ENCODE measurements at regions of chr6 and their contacts with region 1.

Region 1: DNA sequence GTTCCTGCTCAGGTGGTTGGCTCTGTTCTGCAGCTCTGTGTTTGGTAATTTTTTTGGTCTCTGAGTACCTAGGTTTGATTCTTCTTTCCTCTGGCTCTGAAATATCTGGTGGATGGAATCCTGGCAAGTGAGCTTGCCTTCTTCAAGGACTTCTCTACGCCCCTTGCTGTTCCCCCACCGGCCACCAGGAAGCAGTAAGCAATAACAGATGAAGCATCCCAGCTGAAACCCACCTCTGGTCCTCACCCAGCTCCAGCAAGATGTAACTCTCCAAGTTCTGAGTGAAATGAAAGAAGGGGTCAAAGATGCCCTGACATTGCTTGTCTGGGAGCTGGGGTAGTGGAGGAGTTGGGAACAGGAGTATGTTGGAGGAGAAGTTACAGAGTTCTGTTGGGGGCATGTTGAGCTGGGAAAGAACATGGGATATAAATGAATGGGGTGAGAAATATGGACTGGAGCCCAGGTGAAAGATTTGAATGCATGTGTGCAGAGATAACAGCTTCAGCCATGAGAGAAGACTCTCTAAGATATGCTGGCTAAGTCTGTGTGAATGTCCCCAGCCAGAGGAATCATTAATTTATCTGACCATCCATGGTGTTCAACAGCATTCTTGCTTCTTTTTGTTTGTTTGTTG is 51.3 kb upstream of the GLP1R start:
- DNase-seq: peak; percentile 74
- ATAC-seq: peak; percentile 66
- H3K4me3 Mint-ChIP-seq: no peak overlapping the region
- H3K27ac Mint-ChIP-seq: no peak overlapping the region
- H3K4me1 Mint-ChIP-seq: no peaks in the 10 kb centered on the region
- H3K27me3 Mint-ChIP-seq: peaks cover 32% of the 10 kb centered on the region
- CTCF ChIP-seq: peak; percentile 72

Region 2: GRCh38 chr6:38915205-38915925 is 81.9 kb before region 1 on chr6:
- CTCF ChIA-PET with region 1: no interaction called
- POLR2A ChIA-PET with region 1: no interaction called
- intact Hi-C with region 1: no loop called
- DNase-seq: no peak
- ATAC-seq: no peak
- H3K4me3 Mint-ChIP-seq: no peak overlapping the region
- H3K27ac Mint-ChIP-seq: no peak overlapping the region
- H3K4me1 Mint-ChIP-seq: no peaks in the 10 kb centered on the region
- H3K27me3 Mint-ChIP-seq: peaks cover 4% of the 10 kb centered on the region
- CTCF ChIP-seq: no peak

Region 3: DNA sequence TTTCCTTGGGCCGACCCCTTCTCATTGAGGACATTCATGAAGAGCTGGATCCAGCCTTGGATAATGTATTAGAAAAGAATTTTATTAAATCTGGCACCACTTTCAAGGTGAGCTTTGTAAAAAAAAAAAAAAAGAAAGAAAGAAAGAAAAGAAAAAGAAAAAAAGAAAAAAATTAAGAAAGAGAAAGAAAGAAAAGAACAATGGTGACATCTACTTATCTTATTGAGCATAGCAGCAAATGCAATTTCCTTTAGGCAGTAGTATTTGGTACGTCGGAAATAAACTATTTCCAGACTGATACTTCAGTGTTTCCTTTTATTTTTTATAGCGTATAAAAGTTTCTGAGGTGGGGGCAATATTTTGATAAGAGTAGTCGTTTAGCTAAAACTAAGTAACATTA is 67.7 kb before region 1 on chr6:
- CTCF ChIA-PET with region 1: no interaction called
- POLR2A ChIA-PET with region 1: no interaction called
- intact Hi-C with region 1: no loop called
- DNase-seq: no peak
- ATAC-seq: no peak
- H3K4me3 Mint-ChIP-seq: no peak overlapping the region
- H3K27ac Mint-ChIP-seq: no peak overlapping the region
- H3K4me1 Mint-ChIP-seq: no peaks in the 10 kb centered on the region
- H3K27me3 Mint-ChIP-seq: peaks cover 7% of the 10 kb centered on the region
- CTCF ChIP-seq: no peak

Region 4: DNA sequence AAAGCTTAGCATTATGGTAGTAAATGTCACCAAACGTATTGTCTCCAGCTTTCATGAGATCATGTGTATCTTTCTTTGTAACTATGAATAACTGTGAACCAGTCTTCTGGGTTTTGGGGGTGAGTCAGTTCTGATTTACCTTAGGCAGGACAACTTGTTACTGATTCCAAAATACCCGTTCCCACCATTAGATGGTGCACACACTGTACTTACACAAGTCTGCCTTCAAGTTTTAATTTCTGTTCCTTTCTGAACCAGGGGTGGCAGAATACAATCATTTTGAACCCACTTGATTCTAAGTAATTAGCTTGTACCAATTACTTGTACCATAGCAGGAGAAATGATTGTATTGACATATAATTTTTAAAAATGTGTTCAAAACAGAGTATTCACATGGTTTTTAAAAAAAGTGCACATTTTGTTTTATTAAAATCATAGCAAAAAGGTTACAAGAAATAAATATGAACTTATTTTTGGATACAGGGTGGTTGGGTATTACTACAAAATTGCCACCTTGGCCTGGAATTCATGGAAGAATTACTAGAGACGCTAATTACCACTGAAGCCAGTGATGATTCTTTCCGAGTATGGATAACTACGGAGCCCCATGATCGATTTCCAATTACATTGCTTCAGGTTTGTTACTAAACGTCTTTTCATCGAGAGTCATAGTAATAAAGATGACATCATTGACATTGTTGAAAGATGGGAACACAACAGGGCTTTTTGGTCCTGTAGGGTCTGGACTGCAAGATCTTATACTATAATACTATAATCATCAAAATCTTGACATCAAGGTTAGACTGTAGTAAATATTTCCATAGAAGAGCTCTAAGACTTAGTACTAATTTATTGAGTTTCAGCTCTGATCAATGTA is 23.8 kb before region 1 on chr6:
- CTCF ChIA-PET with region 1: interaction called, 22 read pairs
- POLR2A ChIA-PET with region 1: no interaction called
- intact Hi-C with region 1: no loop called
- DNase-seq: peak; percentile 51
- ATAC-seq: peak; percentile 97
- H3K4me3 Mint-ChIP-seq: no peak overlapping the region
- H3K27ac Mint-ChIP-seq: no peak overlapping the region
- H3K4me1 Mint-ChIP-seq: peaks cover 2% of the 10 kb centered on the region
- H3K27me3 Mint-ChIP-seq: peaks cover 13% of the 10 kb centered on the region
- CTCF ChIP-seq: peak; percentile 68

Region 5: DNA sequence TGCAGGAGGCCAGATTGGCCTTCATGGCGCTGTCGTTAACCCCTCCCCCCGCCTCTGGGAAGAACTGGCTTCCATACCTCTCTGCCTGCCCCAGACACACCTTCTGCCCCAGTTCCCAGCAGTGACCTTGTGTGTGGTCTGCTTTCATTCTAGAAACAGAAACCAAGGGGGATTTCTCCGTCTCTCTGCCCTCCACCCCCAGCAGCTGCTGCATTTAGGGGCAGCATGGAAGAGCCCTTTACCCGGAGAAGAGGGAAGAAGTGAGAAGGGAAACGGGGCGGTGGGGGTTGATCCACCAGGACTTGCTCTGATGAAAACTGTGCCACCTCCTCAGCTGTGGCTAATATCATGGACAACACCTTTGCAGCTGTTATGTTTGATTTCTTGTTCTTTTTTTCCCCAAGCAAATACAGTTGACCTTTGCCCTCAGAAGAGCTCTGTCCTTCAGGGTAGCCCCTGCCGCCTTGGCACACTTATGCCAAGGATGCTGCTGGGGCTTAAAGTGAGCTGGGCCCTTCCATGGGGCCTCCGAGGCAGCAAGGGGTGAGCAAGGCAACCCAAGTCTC is 57.4 kb after region 1 on chr6:
- CTCF ChIA-PET with region 1: no interaction called
- POLR2A ChIA-PET with region 1: no interaction called
- intact Hi-C with region 1: no loop called
- DNase-seq: no peak
- ATAC-seq: no peak
- H3K4me3 Mint-ChIP-seq: no peak overlapping the region
- H3K27ac Mint-ChIP-seq: no peak overlapping the region
- H3K4me1 Mint-ChIP-seq: peaks cover 24% of the 10 kb centered on the region
- H3K27me3 Mint-ChIP-seq: peaks cover 16% of the 10 kb centered on the region
- CTCF ChIP-seq: no peak

Region 6: GRCh38 chr6:39077882-39078594 is 80.8 kb after region 1 on chr6:
- CTCF ChIA-PET with region 1: no interaction called
- POLR2A ChIA-PET with region 1: no interaction called
- intact Hi-C with region 1: no loop called
- DNase-seq: no peak
- ATAC-seq: no peak
- H3K4me3 Mint-ChIP-seq: no peak overlapping the region
- H3K27ac Mint-ChIP-seq: no peak overlapping the region
- H3K4me1 Mint-ChIP-seq: peaks cover 9% of the 10 kb centered on the region
- H3K27me3 Mint-ChIP-seq: no peaks in the 10 kb centered on the region
- CTCF ChIP-seq: no peak

Region 7: DNA sequence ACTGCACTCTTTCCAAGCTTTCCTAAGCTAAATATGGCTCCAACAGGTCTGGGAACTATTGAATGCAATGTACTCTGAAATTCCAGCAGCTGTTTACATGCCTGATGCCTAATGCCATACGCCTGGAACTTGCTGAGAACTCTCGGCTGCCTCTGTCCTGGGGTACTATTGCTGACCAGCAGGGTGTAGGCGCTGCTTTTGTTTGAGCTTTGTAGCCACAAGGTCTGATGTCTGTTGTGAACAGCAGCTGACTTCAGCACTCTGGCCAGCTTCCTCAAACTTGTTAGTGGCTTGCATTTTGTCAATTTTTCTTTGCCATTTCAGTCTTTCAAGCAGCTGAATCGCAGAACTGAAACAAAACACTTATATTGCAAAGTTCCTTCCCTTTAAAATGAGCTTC is 91.1 kb after region 1 on chr6:
- CTCF ChIA-PET with region 1: interaction called, 11 read pairs
- POLR2A ChIA-PET with region 1: no interaction called
- intact Hi-C with region 1: no loop called
- DNase-seq: peak; percentile 61
- ATAC-seq: peak; percentile 38
- H3K4me3 Mint-ChIP-seq: no peak overlapping the region
- H3K27ac Mint-ChIP-seq: no peak overlapping the region
- H3K4me1 Mint-ChIP-seq: peaks cover 21% of the 10 kb centered on the region
- H3K27me3 Mint-ChIP-seq: peaks cover 49% of the 10 kb centered on the region
- CTCF ChIP-seq: no peak

Region 8: DNA sequence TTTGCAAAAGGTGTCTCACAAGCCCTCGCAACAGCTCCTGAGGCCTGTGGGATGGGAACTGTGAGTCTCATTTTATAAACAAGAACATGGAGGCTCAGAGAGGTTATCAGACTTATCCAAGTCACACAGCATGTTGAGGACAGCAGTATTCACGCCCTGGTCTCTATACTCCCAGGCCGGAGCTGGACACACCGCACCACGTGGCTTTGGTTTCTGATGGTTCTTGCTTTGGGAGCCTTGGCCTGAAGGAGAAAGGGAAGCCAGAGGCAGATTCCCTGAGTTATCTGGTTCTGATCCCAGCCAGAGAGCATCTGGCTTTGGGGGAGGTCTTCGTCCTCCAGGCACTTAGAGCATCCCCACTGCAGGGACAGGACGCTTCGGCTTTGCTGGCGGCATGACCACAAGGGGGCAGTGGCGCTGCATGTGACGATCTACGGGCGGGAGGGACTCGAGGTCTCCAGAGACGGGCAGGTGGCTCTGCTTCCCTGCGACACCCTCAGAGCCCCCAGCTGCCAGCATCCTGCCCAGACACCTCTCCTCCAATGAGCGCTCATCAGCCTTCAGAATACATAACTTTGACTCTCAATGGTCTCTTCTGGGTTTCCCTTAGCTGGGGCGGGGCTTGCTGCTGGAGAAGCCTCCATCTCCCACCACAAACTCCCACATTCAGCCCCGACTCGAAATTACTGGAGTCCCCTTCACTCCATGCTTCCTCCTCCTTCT is 169.1 kb after region 1 on chr6:
- CTCF ChIA-PET with region 1: interaction called, 17 read pairs
- POLR2A ChIA-PET with region 1: no interaction called
- intact Hi-C with region 1: no loop called
- DNase-seq: peak; percentile 90
- ATAC-seq: peak; percentile 97
- H3K4me3 Mint-ChIP-seq: no peak overlapping the region
- H3K27ac Mint-ChIP-seq: no peak overlapping the region
- H3K4me1 Mint-ChIP-seq: peaks cover 8% of the 10 kb centered on the region
- H3K27me3 Mint-ChIP-seq: no peaks in the 10 kb centered on the region
- CTCF ChIP-seq: peak; percentile 91

Region 9: DNA sequence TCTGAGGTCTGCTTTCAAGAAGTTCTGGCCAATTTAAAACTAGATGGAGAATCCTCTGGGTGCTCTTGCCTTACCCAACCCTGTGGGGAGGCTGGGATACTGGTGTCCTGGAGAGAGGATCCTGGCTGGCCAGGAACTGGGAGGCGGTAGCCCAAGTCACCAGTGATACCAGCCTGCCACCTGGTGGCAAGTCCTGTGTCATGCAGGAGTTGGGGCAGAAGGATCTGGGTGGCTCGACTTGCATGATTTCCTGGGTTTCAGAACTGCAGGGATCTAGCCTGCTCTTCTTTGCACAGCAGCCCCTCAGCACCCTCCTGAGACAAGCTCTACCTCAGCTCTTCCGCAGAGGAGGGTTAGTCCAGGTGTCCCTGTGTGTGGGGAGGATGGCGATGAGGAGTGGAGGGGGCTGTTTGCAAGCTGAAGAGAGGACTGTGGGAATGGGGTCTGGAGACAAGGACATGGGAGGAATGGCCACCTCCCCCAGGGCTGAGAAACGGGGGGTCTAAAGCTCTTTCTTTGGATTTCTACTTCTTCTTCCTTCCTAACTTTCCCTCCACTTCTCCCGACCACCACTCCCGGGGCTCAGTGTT is 312.8 kb after region 1 on chr6:
- CTCF ChIA-PET with region 1: interaction called, 64 read pairs
- POLR2A ChIA-PET with region 1: no interaction called
- intact Hi-C with region 1: loop called (anchors 2 kb)
- DNase-seq: peak; percentile 68
- ATAC-seq: peak; percentile 83
- H3K4me3 Mint-ChIP-seq: no peak overlapping the region
- H3K27ac Mint-ChIP-seq: no peak overlapping the region
- H3K4me1 Mint-ChIP-seq: peaks cover 2% of the 10 kb centered on the region
- H3K27me3 Mint-ChIP-seq: peaks cover 27% of the 10 kb centered on the region
- CTCF ChIP-seq: peak; percentile 77